HCT116 (cell line): ENCODE measurements at regions of chr17 and their contacts with region 1.

Region 1: GRCh38 chr17:38752119-38752929 is at the start of gene PSMB3:
- DNase-seq: peak; percentile 100
- ATAC-seq: peak; percentile 77
- H3K4me3 ChIP-seq: peak within 1 kb of the TSS; percentile 99 to 100
- H3K27ac ChIP-seq: peak within 1 kb of the TSS; percentile 100
- H3K4me1 ChIP-seq: peaks cover 18 to 46% of the 10 kb centered on the region in 2 experiments
- H3K27me3 ChIP-seq: no peaks in the 10 kb centered on the region
- CTCF ChIP-seq: no peak
- POLR2A ChIP-seq: peak; percentile 58
- RAD21 ChIP-seq: no peak
- total RNA-seq, gene PSMB3: 346 TPM

Region 2: GRCh38 chr17:38674749-38675615 is 77.3 kb before region 1 on chr17 and contains the start of gene EPOP:
- CTCF ChIA-PET with region 1: no interaction called
- POLR2A ChIA-PET with region 1: interaction called, 3 read pairs
- RAD21 ChIA-PET with region 1: no interaction called
- intact Hi-C with region 1: loop called (anchors 5 kb)
- DNase-seq: peak; percentile 77
- ATAC-seq: peak; percentile 84
- H3K4me3 ChIP-seq: peak within 1 kb of the TSS; percentile 75 to 77
- H3K27ac ChIP-seq: peak within 1 kb of the TSS; percentile 91
- H3K4me1 ChIP-seq: peaks cover 29 to 64% of the 10 kb centered on the region in 2 experiments
- H3K27me3 ChIP-seq: no peaks in the 10 kb centered on the region
- CTCF ChIP-seq: 0 out of 6 replicates have a peak, but pooled peaks of 1 of the 3 experiments have one; percentile 6
- POLR2A ChIP-seq: no peak
- RAD21 ChIP-seq: no peak
- total RNA-seq, gene EPOP: 37.9 TPM

Region 3: DNA sequence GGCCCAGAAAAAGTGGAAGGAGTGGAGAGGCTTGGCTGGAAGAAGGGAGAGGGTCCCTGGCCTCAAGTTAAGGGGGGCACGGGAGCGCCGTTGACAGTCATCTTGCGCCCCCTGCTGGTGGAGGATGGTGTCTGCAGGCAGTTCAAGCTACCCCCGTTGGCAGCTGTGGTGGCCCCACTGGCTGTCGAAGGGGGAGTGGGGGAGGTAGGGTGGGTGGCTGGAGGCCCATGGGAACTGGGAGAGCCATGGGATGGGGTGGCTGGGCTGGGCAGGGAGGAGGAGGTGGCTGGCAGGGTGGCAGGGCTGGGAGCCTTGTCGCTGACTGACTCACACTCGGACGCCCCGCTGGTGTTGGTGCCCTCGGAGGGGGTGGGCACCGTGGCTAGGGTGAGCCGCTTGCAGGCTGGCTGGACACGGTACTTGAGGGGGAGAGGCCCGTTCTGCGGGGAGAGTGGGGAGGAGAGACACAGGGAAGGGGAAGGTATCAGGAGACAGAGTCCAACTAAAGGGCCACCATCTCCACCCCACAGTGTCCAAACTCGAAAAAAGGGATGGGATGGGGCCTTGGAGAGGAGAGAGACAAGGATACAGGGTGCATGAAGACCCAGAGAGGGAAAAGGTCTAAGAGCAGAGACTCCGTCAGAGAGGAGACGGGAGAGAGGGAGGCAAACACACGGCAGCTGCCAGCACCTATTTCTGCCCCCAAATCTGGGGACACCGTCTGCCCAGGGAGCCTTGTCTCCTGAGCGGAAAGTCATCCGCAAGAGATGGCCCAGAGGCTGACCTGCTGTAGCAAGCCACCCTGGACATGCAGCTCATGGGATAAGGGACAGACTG is 16.9 kb before region 1 on chr17:
- CTCF ChIA-PET with region 1: interaction called, 11 read pairs
- POLR2A ChIA-PET with region 1: no interaction called
- RAD21 ChIA-PET with region 1: no interaction called
- intact Hi-C with region 1: no loop called
- DNase-seq: no peak
- ATAC-seq: peak; percentile 29
- H3K4me3 ChIP-seq: no peak overlapping the region
- H3K27ac ChIP-seq: peak overlapping the region; percentile 43; the same call in 1 of the 2 replicates
- H3K4me1 ChIP-seq: peaks cover 8 to 26% of the 10 kb centered on the region in 2 experiments; a peak in 2 of 4 replicates
- H3K27me3 ChIP-seq: no peaks in the 10 kb centered on the region
- CTCF ChIP-seq: peak; percentile 56 to 90 (median 90); a peak in 5 of 6 replicates
- POLR2A ChIP-seq: peak; percentile 7
- RAD21 ChIP-seq: peak; percentile 74

Region 4: DNA sequence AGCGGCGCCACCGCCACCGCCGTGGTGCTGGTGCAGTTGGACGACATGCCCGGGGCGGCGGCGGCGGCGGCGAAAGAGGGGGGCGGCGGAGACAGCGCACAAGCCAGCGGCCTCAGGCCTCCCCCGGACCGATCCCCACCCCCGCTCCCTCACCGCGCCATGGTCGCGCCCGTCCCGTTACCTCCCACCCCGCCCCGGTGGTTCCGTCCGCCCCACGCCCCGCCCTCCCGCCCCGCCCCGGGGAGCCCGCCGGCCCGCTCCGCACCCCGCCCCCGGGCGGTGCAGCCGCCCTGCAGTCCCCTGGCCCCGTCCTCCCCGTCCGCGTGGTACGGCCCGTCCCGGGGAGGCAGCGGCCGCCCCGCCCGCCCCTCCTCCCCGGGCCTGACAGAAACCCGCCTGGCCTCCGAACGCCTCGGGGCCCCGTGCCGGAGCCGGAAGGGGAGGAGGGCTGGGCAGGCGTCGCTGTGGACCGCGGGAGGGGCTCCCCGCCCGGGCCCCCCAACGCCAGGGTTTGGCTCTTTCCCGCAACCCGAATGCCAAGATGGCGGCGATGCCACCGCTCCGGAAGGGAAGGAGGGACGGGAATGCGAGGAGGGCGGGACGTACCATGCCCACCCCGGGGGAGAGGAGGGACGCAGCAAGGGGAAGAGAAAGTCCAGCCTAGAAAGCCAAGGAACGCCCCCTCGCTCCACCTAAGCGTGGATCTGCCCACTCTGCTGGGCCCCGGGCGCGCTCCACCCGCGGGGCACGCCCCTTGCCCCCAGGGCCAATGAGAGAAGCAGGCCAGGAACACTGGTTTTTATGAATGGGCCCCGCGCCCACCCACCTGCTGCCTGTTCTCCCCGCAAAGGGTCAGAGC is 47.3 kb after region 1 on chr17 and contains the start of gene PIP4K2B:
- CTCF ChIA-PET with region 1: no interaction called
- POLR2A ChIA-PET with region 1: interaction called, 3 read pairs
- RAD21 ChIA-PET with region 1: no interaction called
- intact Hi-C with region 1: loop called (anchors 5 kb)
- DNase-seq: peak; percentile 97
- ATAC-seq: peak; percentile 92
- H3K4me3 ChIP-seq: peak within 1 kb of the TSS; percentile 83 to 85
- H3K27ac ChIP-seq: peak within 1 kb of the TSS; percentile 99
- H3K4me1 ChIP-seq: peaks cover 11 to 20% of the 10 kb centered on the region in 2 experiments
- H3K27me3 ChIP-seq: no peaks in the 10 kb centered on the region
- CTCF ChIP-seq: no peak
- POLR2A ChIP-seq: peak; percentile 65
- RAD21 ChIP-seq: no peak
- total RNA-seq, gene PIP4K2B: 40.3 TPM

Region 5: GRCh38 chr17:38853292-38854219 is 101.2 kb after region 1 on chr17 and contains the start of gene RPL23:
- CTCF ChIA-PET with region 1: no interaction called
- POLR2A ChIA-PET with region 1: interaction called, 3 read pairs
- RAD21 ChIA-PET with region 1: no interaction called
- intact Hi-C with region 1: loop called (anchors 5 kb)
- DNase-seq: peak; percentile 95
- ATAC-seq: peak; percentile 80
- H3K4me3 ChIP-seq: peak within 1 kb of the TSS; percentile 67 to 99
- H3K27ac ChIP-seq: peak within 1 kb of the TSS; percentile 85
- H3K4me1 ChIP-seq: peaks cover 19 to 44% of the 10 kb centered on the region in 2 experiments; a peak in 3 of 4 replicates
- H3K27me3 ChIP-seq: no peaks in the 10 kb centered on the region
- CTCF ChIP-seq: no peak
- POLR2A ChIP-seq: peak; percentile 98
- RAD21 ChIP-seq: peak; percentile 17; the same call in 1 of the 2 replicates
- total RNA-seq, gene RPL23: 1,631 TPM

Region 6: DNA sequence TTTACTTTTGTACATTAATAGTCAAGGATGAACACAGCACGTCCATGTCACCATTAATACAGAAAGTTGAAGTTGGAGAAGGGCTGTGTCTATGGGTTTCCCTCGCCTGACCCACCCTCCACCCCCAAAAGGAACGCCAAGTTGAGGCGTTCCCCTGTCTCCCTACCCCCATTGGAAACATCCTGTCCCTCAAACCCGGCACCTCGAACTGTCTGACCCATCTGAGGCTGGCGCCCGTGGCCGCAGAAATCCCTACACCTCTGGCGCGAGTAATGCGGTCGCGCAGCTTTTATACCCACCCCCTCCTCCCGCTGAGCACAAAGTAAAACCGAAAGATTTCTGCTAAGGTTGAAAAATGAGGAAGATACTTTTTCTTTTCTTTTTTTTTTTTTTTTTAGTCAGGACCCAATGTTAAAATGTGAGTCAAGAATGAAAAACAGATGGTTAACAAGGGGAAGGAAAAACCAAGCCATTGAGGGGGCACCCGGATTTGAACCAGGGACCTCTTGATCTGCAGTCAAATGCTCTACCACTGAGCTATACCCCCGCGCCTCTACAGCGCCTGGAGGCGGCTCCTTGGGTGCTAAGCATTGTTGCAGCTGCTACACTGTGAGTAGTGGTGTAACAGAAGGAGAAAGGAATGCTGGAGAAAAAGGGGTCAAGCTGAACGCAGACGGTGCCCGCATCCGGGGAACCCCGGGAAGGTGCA is 116.6 kb after region 1 on chr17:
- CTCF ChIA-PET with region 1: no interaction called
- POLR2A ChIA-PET with region 1: interaction called, 6 read pairs
- RAD21 ChIA-PET with region 1: interaction called in 1 of 2 experiments, 3 read pairs
- intact Hi-C with region 1: loop called (anchors 5 kb)
- DNase-seq: peak; percentile 79
- ATAC-seq: peak; percentile 55
- H3K4me3 ChIP-seq: peak overlapping the region; percentile 83 to 98
- H3K27ac ChIP-seq: peak overlapping the region; percentile 97
- H3K4me1 ChIP-seq: peaks cover 58 to 85% of the 10 kb centered on the region in 2 experiments
- H3K27me3 ChIP-seq: no peaks in the 10 kb centered on the region
- CTCF ChIP-seq: peak in 2 of 3 experiments; percentile 26 to 27; a peak in 4 of 6 replicates
- POLR2A ChIP-seq: no peak
- RAD21 ChIP-seq: 0 out of 2 replicates have a peak, but pooled peaks have one; percentile 9

Region 7: GRCh38 chr17:39014044-39014794 is 261.9 kb after region 1 on chr17:
- CTCF ChIA-PET with region 1: no interaction called
- POLR2A ChIA-PET with region 1: no interaction called
- RAD21 ChIA-PET with region 1: no interaction called
- intact Hi-C with region 1: no loop called
- DNase-seq: no peak
- ATAC-seq: peak; percentile 61
- H3K4me3 ChIP-seq: no peak overlapping the region
- H3K27ac ChIP-seq: no peak overlapping the region
- H3K4me1 ChIP-seq: peaks cover 8 to 16% of the 10 kb centered on the region in 2 experiments; a peak in 3 of 4 replicates
- H3K27me3 ChIP-seq: no peaks in the 10 kb centered on the region
- CTCF ChIP-seq: no peak
- POLR2A ChIP-seq: no peak
- RAD21 ChIP-seq: no peak